CD14-positive monocyte (primary cell): ENCODE measurements at regions of chr1 and their contacts with region 1.

Region 1: DNA sequence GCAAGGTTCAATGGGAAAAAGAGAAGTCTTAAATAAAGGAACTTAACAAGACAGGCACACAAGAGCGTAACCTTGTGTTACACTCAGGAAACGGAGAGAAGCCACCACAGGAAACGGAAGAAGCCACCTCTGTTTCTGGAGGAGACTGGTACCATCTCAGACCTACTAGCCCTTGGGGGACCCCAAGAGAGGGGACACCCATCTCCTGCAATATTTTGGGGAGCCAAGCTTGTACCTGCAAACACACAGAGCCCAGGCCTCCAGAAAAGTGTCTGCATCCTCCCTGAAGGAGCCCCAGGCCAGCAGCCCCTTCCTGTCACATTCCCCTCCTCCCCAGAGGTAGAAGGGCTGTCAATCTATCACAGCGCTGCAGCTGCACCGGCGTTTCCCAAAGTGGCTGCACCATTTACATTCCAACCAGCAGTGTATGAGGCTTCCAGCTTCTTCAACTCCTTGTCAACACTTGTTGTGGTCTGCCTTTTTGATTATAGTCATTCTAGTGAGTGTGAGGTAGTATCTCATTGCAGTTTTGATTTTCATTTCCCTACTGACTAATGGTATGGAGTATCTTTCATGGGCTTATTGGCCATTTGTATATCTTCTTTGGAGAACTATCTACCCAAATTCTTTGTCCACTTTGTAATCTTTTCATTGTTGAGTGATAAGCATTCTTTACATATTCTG is 23.0 kb upstream of the PADI1 start:
- DNase-seq: peak; percentile 26 to 60 (median 47)
- H3K4me3 ChIP-seq: peak overlapping the region in 1 of 3 experiments; percentile 49
- H3K4me3 Mint-ChIP-seq: peak overlapping the region; percentile 16 to 27
- H3K27ac ChIP-seq: peak overlapping the region in 1 of 2 donors; percentile 60
- H3K27ac Mint-ChIP-seq: peak overlapping the region in 5 of 7 donors; percentile 46 to 72 (median 66)
- H3K4me1 ChIP-seq: peaks cover 18 to 29% of the 10 kb centered on the region in 2 donors
- H3K4me1 Mint-ChIP-seq: peaks cover 26% of the 10 kb centered on the region
- H3K27me3 ChIP-seq: no peaks in the 10 kb centered on the region
- H3K27me3 Mint-ChIP-seq: peaks cover 0 to 2% (median 1%) of the 10 kb centered on the region in 3 donors
- CTCF ChIP-seq: no peak

Region 2: GRCh38 chr1:17011439-17012307 is 170.2 kb before region 1 on chr1 and contains the start of gene ATP13A2:
- intact Hi-C with region 1: no loop called
- DNase-seq: peak; percentile 30 to 71 (median 52)
- H3K4me3 ChIP-seq: peak within 1 kb of the TSS; percentile 68 to 91 (median 81)
- H3K4me3 Mint-ChIP-seq: peak within 1 kb of the TSS; percentile 86 to 90
- H3K27ac ChIP-seq: peak within 1 kb of the TSS in 1 of 2 donors; percentile 41
- H3K27ac Mint-ChIP-seq: peak within 1 kb of the TSS in 6 of 7 donors; percentile 43 to 80 (median 68)
- H3K4me1 ChIP-seq: peaks cover 54 to 61% of the 10 kb centered on the region in 2 donors
- H3K4me1 Mint-ChIP-seq: peaks cover 57% of the 10 kb centered on the region
- H3K27me3 ChIP-seq: no peaks in the 10 kb centered on the region
- H3K27me3 Mint-ChIP-seq: peaks cover 4 to 5% (median 5%) of the 10 kb centered on the region in 3 donors
- CTCF ChIP-seq: no peak
- polyA plus RNA-seq, gene ATP13A2: 17.6 to 37.8 (median 19.5) TPM

Region 3: GRCh38 chr1:17075470-17076255 is 106.3 kb before region 1 on chr1:
- intact Hi-C with region 1: no loop called
- DNase-seq: peak; percentile 51 to 64 (median 57)
- H3K4me3 ChIP-seq: no peak overlapping the region
- H3K4me3 Mint-ChIP-seq: no peak overlapping the region
- H3K27ac ChIP-seq: peak overlapping the region in 1 of 2 donors; percentile 12
- H3K27ac Mint-ChIP-seq: peak overlapping the region in 4 of 7 donors; percentile 50 to 74 (median 62)
- H3K4me1 ChIP-seq: peaks cover 9 to 16% of the 10 kb centered on the region in 2 donors
- H3K4me1 Mint-ChIP-seq: peaks cover 31% of the 10 kb centered on the region
- H3K27me3 ChIP-seq: no peaks in the 10 kb centered on the region
- H3K27me3 Mint-ChIP-seq: peaks cover 0 to 1% (median 1%) of the 10 kb centered on the region in 3 donors
- CTCF ChIP-seq: peak; percentile 80

Region 4: GRCh38 chr1:17149771-17150170 is 32.2 kb before region 1 on chr1:
- intact Hi-C with region 1: loop called in 1 of 2 experiments (anchors 5 kb)
- DNase-seq: no peak
- H3K4me3 ChIP-seq: no peak overlapping the region
- H3K4me3 Mint-ChIP-seq: peak overlapping the region in 1 of 2 donors; percentile 59
- H3K27ac ChIP-seq: no peak overlapping the region
- H3K27ac Mint-ChIP-seq: no peak overlapping the region
- H3K4me1 ChIP-seq: peaks cover 5 to 13% of the 10 kb centered on the region in 2 donors
- H3K4me1 Mint-ChIP-seq: peaks cover 5% of the 10 kb centered on the region
- H3K27me3 ChIP-seq: peaks cover 0 to 13% of the 10 kb centered on the region in 2 donors
- H3K27me3 Mint-ChIP-seq: peaks cover 12 to 31% (median 25%) of the 10 kb centered on the region in 3 donors
- CTCF ChIP-seq: no peak